ENCODE measurements at regions of chr12 and their contacts with region 1.

Region 1: GRCh38 chr12:6927379-6928024 is at the start of gene ATN1:
- DNase-seq: peak; percentile 51
- H3K4me3 Mint-ChIP-seq: peak within 1 kb of the TSS; percentile 75
- H3K27ac Mint-ChIP-seq: peak within 1 kb of the TSS; percentile 81
- H3K4me1 Mint-ChIP-seq: peaks cover 59% of the 10 kb centered on the region
- H3K27me3 Mint-ChIP-seq: no peaks in the 10 kb centered on the region
- total RNA-seq, gene ATN1: 20.1 to 22.2 TPM

Region 2: DNA sequence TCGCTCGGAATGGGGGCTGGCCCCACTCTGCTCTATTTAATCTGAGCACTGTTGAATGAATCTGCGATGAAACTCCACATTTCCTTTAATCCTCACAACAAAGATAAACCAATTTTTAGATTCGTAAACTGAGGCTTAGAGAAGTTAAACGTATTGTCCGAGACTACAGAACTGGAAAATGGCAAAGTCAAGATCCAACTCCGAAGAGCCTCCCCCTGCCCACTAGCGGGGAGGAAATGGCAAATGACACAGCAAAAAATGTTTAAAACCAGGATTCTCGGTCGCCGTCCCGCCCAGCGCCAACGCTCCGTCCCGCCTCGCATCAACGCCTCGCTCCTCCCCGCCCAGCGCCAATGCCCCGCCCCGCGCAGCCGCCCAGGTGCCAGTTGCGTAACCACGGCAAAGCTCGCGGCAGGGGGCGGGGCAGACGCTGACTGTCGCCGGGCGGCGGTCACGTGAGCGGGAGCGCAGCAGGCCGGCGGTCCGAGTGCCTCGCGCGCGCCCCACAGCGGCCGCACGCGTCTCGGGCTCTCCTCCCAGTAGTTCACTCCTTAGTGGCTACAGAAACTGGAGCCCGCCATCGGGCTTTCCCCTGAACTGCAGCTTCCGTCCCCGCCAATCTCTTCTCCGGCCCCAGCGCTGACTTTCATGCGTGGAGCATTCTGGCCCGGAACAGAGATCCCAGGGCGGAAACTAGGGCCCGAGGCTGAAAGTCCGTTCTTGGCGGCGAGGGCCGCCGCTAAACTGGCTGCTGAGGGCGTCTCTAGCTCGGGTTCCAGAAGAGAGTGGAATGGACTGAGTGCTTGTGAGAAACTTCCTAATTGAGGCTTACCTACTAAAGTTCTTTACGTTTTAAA is 36.5 kb before region 1 on chr12:
- CTCF ChIA-PET with region 1: interaction called, 13 read pairs
- intact Hi-C with region 1: no loop called
- DNase-seq: peak; percentile 100
- H3K4me3 Mint-ChIP-seq: peak overlapping the region; percentile 90
- H3K27ac Mint-ChIP-seq: peak overlapping the region; percentile 98
- H3K4me1 Mint-ChIP-seq: peaks cover 16% of the 10 kb centered on the region
- H3K27me3 Mint-ChIP-seq: no peaks in the 10 kb centered on the region

Region 3: GRCh38 chr12:6937481-6938297 is 10.2 kb after region 1 on chr12:
- CTCF ChIA-PET with region 1: interaction called, 43 read pairs
- intact Hi-C with region 1: loop called (anchors 1 kb)
- DNase-seq: peak; percentile 96
- H3K4me3 Mint-ChIP-seq: peak overlapping the region; percentile 92
- H3K27ac Mint-ChIP-seq: peak overlapping the region; percentile 96
- H3K4me1 Mint-ChIP-seq: peaks cover 47% of the 10 kb centered on the region
- H3K27me3 Mint-ChIP-seq: no peaks in the 10 kb centered on the region

Region 4: DNA sequence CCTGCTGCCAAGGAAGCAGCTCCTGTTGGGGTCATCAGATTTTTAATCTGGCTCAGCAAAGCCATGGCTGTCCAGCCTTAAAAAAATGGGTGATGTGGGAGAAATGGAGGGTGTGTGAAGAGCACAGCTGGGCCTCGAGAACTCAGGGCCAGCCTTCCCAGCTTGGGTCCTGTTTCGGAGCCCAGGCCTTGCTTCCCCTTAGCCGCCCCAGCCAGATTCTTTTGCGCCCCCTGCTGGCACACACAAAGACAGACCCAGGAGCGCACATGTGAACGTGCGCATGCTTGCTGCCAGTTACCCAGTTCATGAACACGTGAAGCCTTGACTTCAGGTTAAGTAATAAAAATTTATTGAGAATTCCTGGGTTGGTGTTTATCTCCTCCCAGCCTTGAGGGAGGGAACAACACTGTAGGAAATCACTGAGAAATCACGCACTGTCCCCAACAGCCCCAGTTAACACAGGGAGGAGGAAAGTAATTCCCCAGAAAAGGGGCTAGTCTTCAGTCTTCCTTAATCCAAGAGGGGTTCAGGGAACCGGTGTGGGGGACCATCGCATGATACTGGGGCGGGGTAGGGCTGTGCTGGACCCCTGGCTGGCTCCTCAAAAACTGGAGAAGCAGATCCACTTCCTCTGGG is 37.6 kb after region 1 on chr12:
- CTCF ChIA-PET with region 1: interaction called, 6 read pairs
- intact Hi-C with region 1: loop called (anchors 1 kb)
- DNase-seq: peak; percentile 95
- H3K4me3 Mint-ChIP-seq: no peak overlapping the region
- H3K27ac Mint-ChIP-seq: peak overlapping the region; percentile 93
- H3K4me1 Mint-ChIP-seq: peaks cover 81% of the 10 kb centered on the region
- H3K27me3 Mint-ChIP-seq: no peaks in the 10 kb centered on the region

Region 5: GRCh38 chr12:7092229-7092985 is 164.9 kb after region 1 on chr12 and contains the start of gene C1R:
- CTCF ChIA-PET with region 1: no interaction called
- intact Hi-C with region 1: loop called (anchors 1 kb)
- DNase-seq: peak; percentile 83
- H3K4me3 Mint-ChIP-seq: peak within 1 kb of the TSS; percentile 73
- H3K27ac Mint-ChIP-seq: peak within 1 kb of the TSS; percentile 22
- H3K4me1 Mint-ChIP-seq: peaks cover 7% of the 10 kb centered on the region
- H3K27me3 Mint-ChIP-seq: no peaks in the 10 kb centered on the region
- total RNA-seq, gene C1R: 1.4 to 1.5 TPM

Region 6: GRCh38 chr12:7241404-7242005 is 314.0 kb after region 1 on chr12:
- CTCF ChIA-PET with region 1: no interaction called
- intact Hi-C with region 1: no loop called
- DNase-seq: no peak
- H3K4me3 Mint-ChIP-seq: no peak overlapping the region
- H3K27ac Mint-ChIP-seq: no peak overlapping the region
- H3K4me1 Mint-ChIP-seq: no peaks in the 10 kb centered on the region
- H3K27me3 Mint-ChIP-seq: peaks cover 16% of the 10 kb centered on the region

Region 7: GRCh38 chr12:7282844-7283243 is 355.3 kb after region 1 on chr12:
- CTCF ChIA-PET with region 1: no interaction called
- intact Hi-C with region 1: no loop called
- DNase-seq: no peak
- H3K4me3 Mint-ChIP-seq: no peak overlapping the region
- H3K27ac Mint-ChIP-seq: no peak overlapping the region
- H3K4me1 Mint-ChIP-seq: no peaks in the 10 kb centered on the region
- H3K27me3 Mint-ChIP-seq: peaks cover 18% of the 10 kb centered on the region

Region 8: DNA sequence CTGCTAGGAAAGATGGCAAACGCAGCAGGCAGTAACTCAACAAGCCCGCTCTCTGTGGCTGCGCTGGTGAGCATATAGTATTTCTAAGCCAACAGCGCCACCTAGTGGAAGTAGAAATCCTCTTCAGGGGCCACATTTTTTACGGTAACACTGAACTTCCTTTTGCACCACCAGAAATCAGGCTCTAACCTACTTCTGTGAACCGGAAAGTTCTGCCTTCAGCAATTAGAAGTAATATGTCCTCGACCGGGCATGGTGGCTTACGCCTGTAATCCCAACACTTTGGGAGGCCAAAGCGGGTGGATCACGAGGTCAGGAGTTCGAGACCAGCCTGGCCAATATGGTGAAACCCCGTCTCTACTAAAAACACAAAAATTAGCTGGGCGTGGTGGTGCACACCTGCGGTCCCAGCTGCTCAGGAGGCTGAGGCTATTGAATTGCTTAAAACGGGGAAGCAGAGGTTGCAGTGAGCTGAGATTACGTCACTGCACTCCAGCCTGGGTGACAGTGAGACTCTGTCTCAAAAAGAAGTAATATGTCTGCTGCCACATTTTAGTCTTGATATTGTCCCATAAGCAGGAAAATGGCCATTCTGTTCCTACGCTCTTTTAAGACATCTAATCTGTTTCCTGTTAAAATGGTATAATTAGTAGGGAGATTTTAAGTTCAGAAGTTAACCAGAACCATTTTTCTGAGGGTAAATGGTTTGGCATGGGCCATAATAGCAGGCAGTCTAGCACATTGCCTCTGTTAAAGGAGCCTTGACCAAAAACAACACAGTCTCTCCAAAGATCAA is 711.5 kb after region 1 on chr12:
- CTCF ChIA-PET with region 1: no interaction called
- intact Hi-C with region 1: loop called (anchors 10 kb)
- DNase-seq: peak; percentile 89
- H3K4me3 Mint-ChIP-seq: peak overlapping the region; percentile 65
- H3K27ac Mint-ChIP-seq: peak overlapping the region; percentile 69
- H3K4me1 Mint-ChIP-seq: peaks cover 20% of the 10 kb centered on the region
- H3K27me3 Mint-ChIP-seq: peaks cover 2% of the 10 kb centered on the region

Measured in activated naive CD4-positive, alpha-beta T cell treated with anti-CD3 and anti-CD28 coated beads for 36 hours (primary cell).